Esophagus muscularis mucosa (tissue), 4 donors: ENCODE measurements at regions of chr17 and their contacts with region 1.

Region 1: DNA sequence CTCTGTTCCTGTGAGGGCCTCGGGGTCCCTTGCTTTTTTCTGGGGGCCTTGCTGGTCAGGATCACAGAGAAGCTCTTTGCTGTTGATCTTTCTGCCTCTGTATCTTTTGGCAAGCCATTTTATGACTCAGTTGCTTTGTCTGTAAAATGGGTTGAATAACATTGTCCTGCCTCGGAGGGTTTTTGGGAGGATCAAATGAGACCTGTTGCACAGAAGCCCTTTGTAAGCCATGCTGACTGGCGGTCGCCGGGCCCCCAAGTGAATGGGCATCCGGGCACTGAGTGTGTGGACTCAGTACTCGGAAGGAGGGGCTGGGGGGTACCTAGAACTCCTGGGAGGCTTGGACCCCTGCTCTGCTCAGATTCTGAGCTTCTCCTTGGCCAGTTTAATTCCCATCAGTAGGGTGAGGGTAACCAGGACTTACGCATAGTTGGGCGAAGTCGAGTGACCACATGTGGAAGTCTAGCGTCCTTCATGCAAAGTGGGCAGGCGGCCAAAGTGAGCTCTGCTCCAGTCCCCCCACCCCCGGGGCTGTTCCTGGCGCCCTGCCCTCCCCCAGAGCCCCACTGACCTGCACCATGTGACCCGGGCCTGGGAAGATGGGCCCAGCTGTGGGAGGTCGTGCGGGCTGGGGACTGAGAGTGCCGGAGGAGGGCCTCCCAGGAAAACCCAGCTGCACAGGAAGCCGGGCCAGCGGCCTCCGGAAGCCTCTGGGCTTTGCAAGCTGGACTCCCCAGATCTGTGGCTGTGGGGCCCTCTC is 284.0 kb downstream of the SEC14L1 start:
- DNase-seq: peak; percentile 97
- H3K4me3 ChIP-seq: peak overlapping the region; percentile 12 to 45 (median 29)
- H3K27ac ChIP-seq: peak overlapping the region; percentile 96 to 99 (median 98)
- H3K4me1 ChIP-seq: peaks cover 100% of the 10 kb centered on the region in 4 donors
- H3K27me3 ChIP-seq: no peaks in the 10 kb centered on the region
- CTCF ChIP-seq: no peak
- EP300 ChIP-seq: no peak
- POLR2A ChIP-seq: no peak

Region 2: DNA sequence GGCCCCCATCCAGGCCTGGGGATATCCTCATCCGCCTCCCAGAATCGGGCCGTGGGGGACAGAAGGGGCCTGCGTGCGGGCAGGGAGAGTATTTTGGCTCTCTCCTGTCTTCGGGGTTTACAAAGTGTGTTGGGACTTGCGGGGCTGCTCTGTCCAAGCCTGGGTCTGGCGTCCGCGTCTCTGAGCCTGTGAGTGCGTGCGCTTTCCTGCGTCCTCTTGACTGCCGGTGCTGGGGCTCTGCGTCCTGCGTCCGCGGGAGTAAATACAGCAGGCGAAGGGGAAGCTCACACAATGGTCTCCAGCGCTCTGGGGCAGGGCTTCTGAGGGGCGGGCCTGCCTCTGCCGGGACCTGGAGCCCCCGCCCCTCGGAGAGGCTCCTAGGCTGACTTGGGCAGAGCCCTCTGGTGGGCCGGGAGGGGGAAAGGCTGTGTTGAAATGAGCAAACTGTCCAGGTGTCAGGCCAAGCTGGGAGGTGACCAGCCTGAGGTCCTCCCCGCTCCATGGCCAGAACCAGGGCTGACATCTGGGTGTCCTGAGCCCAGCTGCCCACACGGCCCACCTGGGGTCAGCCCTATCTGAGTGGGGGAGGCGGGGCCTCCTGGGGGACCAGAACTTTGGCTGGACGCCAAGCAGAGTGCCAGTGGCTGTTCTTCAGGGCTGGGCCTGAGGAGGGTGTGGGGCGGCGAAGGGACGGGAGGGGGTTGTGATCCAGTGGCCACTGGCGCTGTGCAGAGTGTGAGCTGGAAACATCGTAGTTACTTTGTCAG is 50.4 kb before region 1 on chr17:
- intact Hi-C with region 1: loop called (anchors 2 kb)
- DNase-seq: peak; percentile 96
- H3K4me3 ChIP-seq: peak overlapping the region; percentile 73 to 93 (median 92)
- H3K27ac ChIP-seq: peak overlapping the region; percentile 99 to 100 (median 99)
- H3K4me1 ChIP-seq: peaks cover 79 to 87% (median 86%) of the 10 kb centered on the region in 4 donors
- H3K27me3 ChIP-seq: no peaks in the 10 kb centered on the region
- CTCF ChIP-seq: peak; percentile 22 to 40 (median 37)
- EP300 ChIP-seq: no peak
- POLR2A ChIP-seq: peak; percentile 41